ENCODE measurements at regions of chr13 and their contacts with region 1.

Region 1: DNA sequence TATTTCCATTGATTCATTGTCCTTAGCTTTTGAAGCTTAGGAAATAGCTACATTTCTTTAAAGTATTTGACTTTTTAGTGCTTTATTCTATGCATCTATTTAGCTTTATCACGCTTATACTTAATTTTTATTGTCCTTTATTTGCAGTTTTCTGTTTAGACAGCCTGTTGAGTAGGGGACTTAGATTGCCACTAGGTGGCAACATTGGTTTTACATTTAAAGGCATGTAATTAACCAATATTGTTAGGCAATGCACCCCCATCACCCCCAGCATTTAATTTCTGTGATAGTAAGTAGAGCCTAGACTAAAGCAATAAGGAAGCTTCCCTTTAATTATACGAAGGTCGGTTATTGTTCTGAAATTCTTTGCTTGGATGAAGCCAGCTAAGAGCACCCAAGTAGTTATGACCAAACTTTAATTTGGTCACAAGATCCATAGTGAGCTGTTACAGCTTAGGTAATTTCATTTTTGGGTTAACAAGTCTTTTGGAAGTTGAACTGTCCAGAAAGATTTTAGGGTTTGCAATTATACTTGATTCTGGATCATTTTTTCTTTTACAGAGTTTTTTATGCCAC is 36.5 kb downstream of the B3GLCT start:
- DNase-seq: no peak
- H3K4me3 Mint-ChIP-seq: no peak overlapping the region
- H3K27ac Mint-ChIP-seq: no peak overlapping the region
- H3K4me1 Mint-ChIP-seq: no peaks in the 10 kb centered on the region
- H3K27me3 Mint-ChIP-seq: no peaks in the 10 kb centered on the region

Region 2: GRCh38 chr13:31248965-31249539 is 12.8 kb after region 1 on chr13:
- CTCF ChIA-PET with region 1: interaction called, 11 read pairs
- DNase-seq: no peak
- H3K4me3 Mint-ChIP-seq: no peak overlapping the region
- H3K27ac Mint-ChIP-seq: no peak overlapping the region
- H3K4me1 Mint-ChIP-seq: no peaks in the 10 kb centered on the region
- H3K27me3 Mint-ChIP-seq: no peaks in the 10 kb centered on the region

Region 3: GRCh38 chr13:31424117-31424729 is 187.9 kb after region 1 on chr13:
- CTCF ChIA-PET with region 1: interaction called, 61 read pairs
- DNase-seq: peak; percentile 71
- H3K4me3 Mint-ChIP-seq: no peak overlapping the region
- H3K27ac Mint-ChIP-seq: no peak overlapping the region
- H3K4me1 Mint-ChIP-seq: no peaks in the 10 kb centered on the region
- H3K27me3 Mint-ChIP-seq: peaks cover 4% of the 10 kb centered on the region